Activated CD8-positive, alpha-beta T cell treated with anti-CD3 and anti-CD28 coated beads for 36 hours (primary cell): ENCODE measurements at regions of chr10 and their contacts with region 1.

Region 1: GRCh38 chr10:119305860-119306513 is 98.6 kb downstream of the GRK5 start:
- DNase-seq: peak; percentile 96
- ATAC-seq: peak; percentile 75
- H3K4me3 Mint-ChIP-seq: peak overlapping the region; percentile 67
- H3K27ac Mint-ChIP-seq: peak overlapping the region; percentile 100
- H3K4me1 Mint-ChIP-seq: peaks cover 81% of the 10 kb centered on the region
- H3K27me3 Mint-ChIP-seq: peaks cover 2% of the 10 kb centered on the region
- CTCF ChIP-seq: no peak

Region 2: GRCh38 chr10:119270762-119271366 is 35.1 kb before region 1 on chr10:
- CTCF ChIA-PET with region 1: interaction called, 4 read pairs
- POLR2A ChIA-PET with region 1: interaction called, 16 read pairs
- intact Hi-C with region 1: no loop called
- DNase-seq: peak; percentile 78
- ATAC-seq: peak; percentile 50
- H3K4me3 Mint-ChIP-seq: peak overlapping the region; percentile 31
- H3K27ac Mint-ChIP-seq: peak overlapping the region; percentile 91
- H3K4me1 Mint-ChIP-seq: peaks cover 54% of the 10 kb centered on the region
- H3K27me3 Mint-ChIP-seq: no peaks in the 10 kb centered on the region
- CTCF ChIP-seq: no peak

Region 3: DNA sequence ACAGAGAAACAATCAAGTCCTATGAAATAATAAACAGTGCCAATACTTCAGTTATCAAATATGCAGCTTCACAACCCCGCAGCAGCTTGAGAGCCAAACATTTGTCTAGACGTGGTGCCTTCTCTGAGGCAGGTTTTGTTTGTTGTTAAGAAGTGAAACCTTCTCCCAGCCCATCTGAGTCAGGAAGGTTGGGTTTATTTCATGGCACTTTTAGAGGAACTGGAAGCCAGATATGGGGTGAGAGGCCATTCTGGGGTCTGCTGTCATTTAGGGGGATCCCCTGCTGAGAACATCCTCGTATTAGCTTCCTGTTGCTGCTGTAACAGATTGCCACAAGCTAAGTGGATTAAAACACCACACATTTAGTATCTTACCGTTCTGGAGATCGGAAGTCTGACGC is 15.0 kb after region 1 on chr10:
- CTCF ChIA-PET with region 1: interaction called, 11 read pairs
- POLR2A ChIA-PET with region 1: interaction called, 24 read pairs
- intact Hi-C with region 1: no loop called
- DNase-seq: no peak
- ATAC-seq: peak; percentile 44
- H3K4me3 Mint-ChIP-seq: no peak overlapping the region
- H3K27ac Mint-ChIP-seq: no peak overlapping the region
- H3K4me1 Mint-ChIP-seq: peaks cover 25% of the 10 kb centered on the region
- H3K27me3 Mint-ChIP-seq: no peaks in the 10 kb centered on the region
- CTCF ChIP-seq: no peak

Region 4: GRCh38 chr10:119416855-119417254 is 110.9 kb after region 1 on chr10:
- CTCF ChIA-PET with region 1: no interaction called
- POLR2A ChIA-PET with region 1: no interaction called
- intact Hi-C with region 1: loop called (anchors 2 kb)
- DNase-seq: peak; percentile 85
- ATAC-seq: peak; percentile 89
- H3K4me3 Mint-ChIP-seq: no peak overlapping the region
- H3K27ac Mint-ChIP-seq: no peak overlapping the region
- H3K4me1 Mint-ChIP-seq: no peaks in the 10 kb centered on the region
- H3K27me3 Mint-ChIP-seq: no peaks in the 10 kb centered on the region
- CTCF ChIP-seq: peak; percentile 82

Region 5: DNA sequence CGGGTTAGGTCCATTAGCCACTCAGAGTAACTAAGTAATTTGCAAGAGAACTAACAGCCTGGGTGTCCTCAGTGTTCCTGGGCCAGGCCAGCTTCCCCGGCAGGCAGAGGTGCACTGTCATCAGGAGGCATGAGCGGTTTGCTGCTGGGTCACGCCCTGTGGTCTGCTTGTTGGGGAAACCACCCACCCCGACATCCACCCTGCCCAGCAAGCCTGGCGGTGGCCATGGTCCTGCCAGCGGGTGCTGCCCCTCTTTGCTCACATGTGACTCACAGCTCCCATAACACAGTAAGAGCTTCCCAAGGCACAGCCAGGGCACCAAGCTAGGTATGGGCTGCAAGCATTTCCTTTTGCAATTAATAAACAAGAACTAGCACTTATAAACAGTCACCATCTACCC is 160.7 kb after region 1 on chr10:
- CTCF ChIA-PET with region 1: no interaction called
- POLR2A ChIA-PET with region 1: no interaction called
- intact Hi-C with region 1: no loop called
- DNase-seq: peak; percentile 66
- ATAC-seq: peak; percentile 85
- H3K4me3 Mint-ChIP-seq: no peak overlapping the region
- H3K27ac Mint-ChIP-seq: no peak overlapping the region
- H3K4me1 Mint-ChIP-seq: peaks cover 12% of the 10 kb centered on the region
- H3K27me3 Mint-ChIP-seq: no peaks in the 10 kb centered on the region
- CTCF ChIP-seq: no peak